A673 (cell line): ENCODE measurements at regions of chr1 and their contacts with region 1.

Region 1: DNA sequence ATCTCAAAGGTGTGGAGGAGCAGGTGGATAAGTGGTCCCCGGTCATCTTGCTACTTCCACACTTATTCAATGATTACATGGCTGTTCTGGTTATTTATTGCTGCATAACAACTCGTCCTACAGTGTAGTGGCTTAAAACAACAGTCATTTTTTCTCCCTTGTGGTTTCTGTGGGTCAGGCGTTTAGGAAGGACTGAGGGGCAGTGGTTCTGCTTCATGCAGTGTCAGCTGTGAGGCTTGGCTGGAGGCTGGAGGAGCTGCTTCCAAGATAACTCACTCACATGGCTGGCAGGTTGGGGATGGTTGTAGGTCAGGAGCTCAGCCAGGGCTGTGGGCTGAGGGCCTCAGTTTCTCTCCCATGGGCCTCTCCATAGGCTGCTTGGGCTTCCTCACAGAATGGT is 5.9 kb upstream of the SLC6A17 start:
- DNase-seq: no peak
- H3K4me3 ChIP-seq: no peak overlapping the region
- H3K27ac ChIP-seq: no peak overlapping the region
- H3K4me1 ChIP-seq: no peaks in the 10 kb centered on the region
- H3K27me3 ChIP-seq: peaks cover 100% of the 10 kb centered on the region
- CTCF ChIP-seq: no peak

Region 2: DNA sequence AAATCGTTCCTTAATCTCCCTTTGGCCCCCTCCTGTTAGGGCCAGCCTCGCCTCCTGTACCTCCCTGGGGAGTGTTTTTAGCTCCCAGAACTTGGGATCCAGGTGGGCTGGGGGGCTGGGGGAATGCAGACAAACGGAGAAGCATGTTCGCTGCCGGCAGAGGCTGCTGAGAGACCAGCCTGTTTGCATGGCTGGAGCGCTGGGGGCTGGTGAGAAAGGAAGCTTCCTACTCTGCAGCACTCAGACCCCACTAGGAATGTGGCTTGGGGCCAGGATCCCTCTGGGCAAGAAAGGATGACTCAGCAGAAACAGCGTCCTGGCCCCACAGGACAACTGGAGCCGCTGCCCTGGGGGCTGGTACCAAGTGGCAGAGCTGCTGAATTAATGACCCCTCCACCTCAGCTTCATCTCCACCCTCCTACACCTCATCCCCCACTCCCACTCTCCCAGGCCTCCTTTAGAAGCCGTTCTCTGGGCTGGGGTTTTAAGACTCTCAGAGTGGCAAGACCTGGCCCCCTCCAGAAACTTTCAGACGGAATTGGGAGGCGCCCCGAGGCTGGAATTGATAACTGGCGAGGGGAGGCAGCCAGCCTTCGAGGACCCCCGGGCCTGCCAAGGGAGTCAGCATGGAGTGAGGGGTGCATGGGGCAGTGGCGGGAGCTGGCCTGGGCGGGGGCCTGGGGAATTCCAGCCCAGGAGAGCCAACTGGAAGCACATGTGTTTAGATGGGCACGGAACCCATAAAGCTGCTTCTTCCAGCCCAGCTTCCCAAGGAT is 352.1 kb before region 1 on chr1:
- CTCF ChIA-PET with region 1: no interaction called
- POLR2A ChIA-PET with region 1: no interaction called
- intact Hi-C with region 1: no loop called
- DNase-seq: peak; percentile 90
- H3K4me3 ChIP-seq: no peak overlapping the region
- H3K27ac ChIP-seq: peak overlapping the region; percentile 60
- H3K4me1 ChIP-seq: peaks cover 37% of the 10 kb centered on the region
- H3K27me3 ChIP-seq: no peaks in the 10 kb centered on the region
- CTCF ChIP-seq: peak; percentile 44

Region 3: GRCh38 chr1:109821221-109821669 is 323.1 kb before region 1 on chr1:
- CTCF ChIA-PET with region 1: no interaction called
- POLR2A ChIA-PET with region 1: no interaction called
- intact Hi-C with region 1: no loop called
- DNase-seq: no peak
- H3K4me3 ChIP-seq: no peak overlapping the region
- H3K27ac ChIP-seq: no peak overlapping the region
- H3K4me1 ChIP-seq: no peaks in the 10 kb centered on the region
- H3K27me3 ChIP-seq: no peaks in the 10 kb centered on the region
- CTCF ChIP-seq: no peak

Region 4: DNA sequence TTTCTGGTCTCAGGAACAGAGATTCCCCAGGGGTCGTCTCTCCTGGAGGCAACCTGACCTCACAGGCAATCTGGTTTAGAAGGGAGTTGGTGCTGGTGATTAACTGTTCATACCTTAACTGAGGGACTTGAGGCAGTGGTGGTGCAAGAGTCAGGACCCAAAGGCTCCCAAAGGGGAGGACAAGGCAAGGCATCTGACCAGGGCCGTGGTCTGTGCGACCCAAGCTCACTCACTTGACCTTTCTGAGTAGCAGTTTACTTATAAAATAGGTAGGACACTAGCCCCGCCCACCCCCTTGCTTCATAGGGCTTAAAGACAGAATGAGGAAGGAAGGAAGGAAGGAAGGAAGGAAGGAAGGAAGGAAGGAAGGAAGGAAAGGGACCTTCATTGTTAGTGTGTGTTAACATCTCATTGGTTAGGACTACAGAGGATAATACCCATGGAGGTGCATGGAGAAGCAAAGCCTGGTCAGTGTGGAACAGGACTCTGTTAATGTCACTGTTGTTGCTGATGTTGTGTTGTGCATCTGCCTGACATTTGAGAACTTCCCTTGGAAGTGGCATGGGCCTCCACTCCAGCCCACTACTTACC is 466.4 kb after region 1 on chr1:
- CTCF ChIA-PET with region 1: no interaction called
- POLR2A ChIA-PET with region 1: interaction called, 11 read pairs
- intact Hi-C with region 1: no loop called
- DNase-seq: peak; percentile 86
- H3K4me3 ChIP-seq: no peak overlapping the region
- H3K27ac ChIP-seq: peak overlapping the region; percentile 96
- H3K4me1 ChIP-seq: peaks cover 55% of the 10 kb centered on the region
- H3K27me3 ChIP-seq: no peaks in the 10 kb centered on the region
- CTCF ChIP-seq: no peak